Sigmoid colon (tissue), 7 donors: ENCODE measurements at regions of chr20 and their contacts with region 1.

Region 1: GRCh38 chr20:38156888-38157634 is 8.0 kb downstream of the TGM2 start:
- DNase-seq: peak; percentile 90
- H3K4me3 ChIP-seq: no peak overlapping the region
- H3K27ac ChIP-seq: peak overlapping the region; percentile 71 to 86 (median 76)
- H3K4me1 ChIP-seq: peaks cover 0 to 59% (median 40%) of the 10 kb centered on the region in 4 donors
- H3K27me3 ChIP-seq: no peaks in the 10 kb centered on the region
- CTCF ChIP-seq: no peak
- EP300 ChIP-seq: peak in 1 of 4 donors; percentile 41
- POLR2A ChIP-seq: no peak

Region 2: DNA sequence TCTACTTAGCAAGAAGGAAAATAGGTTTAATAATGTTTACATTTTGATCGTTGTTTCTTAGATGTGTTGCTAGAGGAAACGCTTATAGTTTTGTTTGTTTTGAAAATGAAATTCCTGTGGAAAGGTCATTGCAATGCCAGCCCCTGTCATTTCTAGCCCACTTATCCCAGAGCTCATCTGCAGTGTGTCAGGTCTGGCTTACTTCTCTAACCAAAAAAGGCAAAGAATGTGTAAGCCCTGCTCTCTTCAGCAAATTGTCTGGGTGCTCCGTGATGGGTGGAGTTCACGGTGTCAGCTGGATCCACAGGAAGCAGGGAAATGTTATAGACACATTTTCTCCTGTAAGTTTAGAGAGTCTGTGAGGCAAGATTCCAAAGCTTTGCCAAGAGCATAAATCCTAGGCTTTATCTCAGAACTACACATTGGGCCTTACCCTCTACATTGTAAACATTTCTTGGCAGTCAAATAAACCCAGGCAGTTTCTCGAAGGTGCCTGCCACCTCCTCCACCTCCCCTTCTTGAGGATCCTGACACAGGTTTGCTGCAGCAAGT is 72.6 kb before region 1 on chr20:
- intact Hi-C with region 1: loop called (anchors 2 kb)
- DNase-seq: no peak
- H3K4me3 ChIP-seq: no peak overlapping the region
- H3K27ac ChIP-seq: peak overlapping the region; percentile 76 to 87 (median 86)
- H3K4me1 ChIP-seq: peaks cover 0 to 71% (median 56%) of the 10 kb centered on the region in 4 donors
- H3K27me3 ChIP-seq: no peaks in the 10 kb centered on the region
- CTCF ChIP-seq: no peak
- EP300 ChIP-seq: peak in 1 of 4 donors; percentile 27
- POLR2A ChIP-seq: no peak

Region 3: DNA sequence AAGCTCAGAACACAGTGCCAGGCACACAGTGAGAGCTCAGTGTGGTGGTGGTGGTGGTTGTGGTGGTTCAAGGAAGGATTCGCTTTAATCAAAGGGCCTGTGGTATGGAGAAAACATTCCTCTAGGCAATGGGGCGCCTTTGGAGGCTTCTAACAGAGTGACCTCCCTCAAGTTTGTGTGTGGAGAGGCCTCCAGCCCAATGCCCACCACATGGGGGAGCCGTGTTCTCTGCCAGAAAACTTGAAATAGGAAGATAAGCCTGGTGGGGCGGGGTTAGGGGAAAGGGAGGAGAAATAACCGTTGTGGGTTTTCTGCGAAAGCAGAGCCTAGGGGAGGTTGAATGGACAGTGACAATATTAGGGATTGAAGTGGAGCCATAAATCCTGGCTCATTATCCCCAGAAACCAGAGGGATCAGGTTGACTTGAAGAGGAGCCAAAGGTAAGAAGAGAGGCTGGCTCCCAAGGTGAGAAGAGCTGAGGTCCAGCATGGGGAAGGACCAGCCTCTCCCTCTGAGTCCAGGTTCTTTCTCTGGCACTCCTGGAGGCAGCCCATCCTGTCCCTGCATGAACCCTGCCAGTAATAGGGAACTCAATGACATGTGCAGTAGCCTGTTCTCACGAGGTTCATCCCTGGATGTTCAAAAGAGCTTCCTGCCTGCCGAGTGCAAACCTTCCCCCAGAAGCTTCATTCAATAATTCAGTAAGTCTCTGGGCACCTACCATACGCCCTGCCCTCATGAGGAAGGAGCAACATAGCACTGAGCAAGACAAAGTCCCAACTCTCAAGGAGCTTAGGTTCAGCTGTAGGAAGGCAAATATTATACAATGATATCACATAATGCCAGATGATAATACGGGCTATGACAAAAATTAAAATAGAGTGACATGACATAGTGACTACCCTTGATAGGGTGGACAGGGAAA is 43.4 kb before region 1 on chr20:
- intact Hi-C with region 1: loop called (anchors 2 kb)
- DNase-seq: no peak
- H3K4me3 ChIP-seq: no peak overlapping the region
- H3K27ac ChIP-seq: no peak overlapping the region
- H3K4me1 ChIP-seq: peaks cover 0 to 55% (median 39%) of the 10 kb centered on the region in 4 donors
- H3K27me3 ChIP-seq: no peaks in the 10 kb centered on the region
- CTCF ChIP-seq: no peak
- EP300 ChIP-seq: no peak
- POLR2A ChIP-seq: no peak